ENCODE measurements at regions of chr1 and their contacts with region 1.

Region 1: GRCh38 chr1:156767101-156767878 is at the start of gene PRCC:
- DNase-seq: peak; percentile 99
- total RNA-seq, gene PRCC: 44.5 TPM

Region 2: GRCh38 chr1:156728597-156729462 is 38.5 kb before region 1 on chr1 and contains the start of gene ISG20L2:
- intact Hi-C with region 1: loop called (anchors 5 kb)
- DNase-seq: peak; percentile 98
- total RNA-seq, gene ISG20L2: 12.4 TPM

Region 3: DNA sequence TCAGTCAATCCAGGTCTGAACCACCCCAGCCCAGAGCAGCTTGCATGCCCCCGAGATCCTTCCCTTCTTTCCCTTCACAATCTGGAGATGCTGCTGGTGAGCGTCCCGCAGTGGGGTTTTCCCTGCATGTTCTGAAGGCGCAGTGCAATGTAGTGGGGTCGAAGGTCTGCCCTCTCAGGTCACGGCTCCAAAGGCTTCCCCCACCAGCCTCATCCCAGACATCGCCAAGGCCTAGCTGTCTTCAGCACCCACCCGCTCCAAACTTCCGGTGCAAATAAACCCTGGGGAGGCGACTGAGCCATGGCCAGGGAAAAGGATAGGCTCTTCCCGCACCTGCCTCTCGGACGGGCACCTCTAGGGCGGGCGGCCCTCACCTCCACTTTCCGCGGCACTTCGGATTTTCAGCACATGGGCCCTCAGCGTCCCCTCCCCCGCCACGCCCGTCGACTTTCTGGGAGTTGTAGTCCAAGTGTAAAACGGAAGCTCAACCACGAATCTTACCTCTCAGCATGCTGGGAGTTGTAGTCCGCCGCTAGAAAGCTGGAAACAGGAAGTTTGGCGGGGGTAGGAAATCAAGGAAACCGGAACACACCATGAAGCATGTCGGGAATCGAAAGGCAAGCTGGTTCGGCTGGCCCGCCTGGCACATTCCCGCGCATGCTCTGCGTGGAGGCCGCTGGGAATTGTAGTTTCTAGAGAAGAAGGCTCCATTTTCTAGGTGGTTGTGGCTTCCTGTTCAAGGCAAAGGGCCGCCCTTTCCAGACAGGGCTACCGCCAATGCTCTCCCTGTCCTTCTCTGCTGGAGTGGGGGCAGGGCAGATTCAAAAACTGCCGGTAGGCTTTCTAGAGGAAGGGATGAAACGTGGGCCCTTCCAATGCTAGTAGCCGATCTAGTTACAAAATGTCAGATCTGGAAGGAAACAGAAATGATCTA is 26.3 kb before region 1 on chr1 and contains the start of gene MRPL24:
- intact Hi-C with region 1: loop called (anchors 1 kb)
- DNase-seq: peak; percentile 99
- total RNA-seq, gene MRPL24: 66.1 TPM

Region 4: GRCh38 chr1:156751758-156752757 is 15.2 kb before region 1 on chr1:
- intact Hi-C with region 1: loop called (anchors 1 kb)
- DNase-seq: peak; percentile 99

Region 5: GRCh38 chr1:156910309-156910782 is 143.1 kb after region 1 on chr1:
- intact Hi-C with region 1: no loop called
- DNase-seq: no peak

Region 6: GRCh38 chr1:157045251-157046218 is 278.2 kb after region 1 on chr1 and contains the start of gene ARHGEF11:
- intact Hi-C with region 1: loop called (anchors 10 kb)
- DNase-seq: peak; percentile 93
- total RNA-seq, gene ARHGEF11: 29.8 TPM

Measured in cardiac septum (tissue), 1 donor.